Activated CD8-positive, alpha-beta T cell treated with anti-CD3 and anti-CD28 coated beads for 36 hours (primary cell): ENCODE measurements at regions of chr6 and their contacts with region 1.

Region 1: DNA sequence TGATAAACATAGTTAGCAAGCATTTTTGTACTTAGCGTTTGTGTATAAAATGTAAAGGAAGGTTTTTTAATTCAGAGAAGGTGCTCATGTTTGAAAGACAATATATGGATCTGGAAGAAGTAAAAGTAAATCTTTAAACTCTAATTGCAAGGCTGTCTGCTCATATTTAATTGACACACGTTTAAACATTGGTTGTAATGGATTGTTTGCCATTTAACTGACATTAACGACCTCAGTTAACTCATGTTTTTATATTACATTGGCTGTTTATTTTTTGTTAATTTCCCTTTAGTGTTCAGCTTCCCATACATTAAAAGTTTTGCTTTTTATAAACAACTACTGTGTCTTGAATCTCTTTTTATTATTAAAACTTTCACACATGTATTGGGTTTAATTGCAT is 208.1 kb downstream of the ARID1B start:
- DNase-seq: no peak
- ATAC-seq: no peak
- H3K4me3 Mint-ChIP-seq: no peak overlapping the region
- H3K27ac Mint-ChIP-seq: no peak overlapping the region
- H3K4me1 Mint-ChIP-seq: peaks cover 65% of the 10 kb centered on the region
- H3K27me3 Mint-ChIP-seq: no peaks in the 10 kb centered on the region
- CTCF ChIP-seq: no peak

Region 2: DNA sequence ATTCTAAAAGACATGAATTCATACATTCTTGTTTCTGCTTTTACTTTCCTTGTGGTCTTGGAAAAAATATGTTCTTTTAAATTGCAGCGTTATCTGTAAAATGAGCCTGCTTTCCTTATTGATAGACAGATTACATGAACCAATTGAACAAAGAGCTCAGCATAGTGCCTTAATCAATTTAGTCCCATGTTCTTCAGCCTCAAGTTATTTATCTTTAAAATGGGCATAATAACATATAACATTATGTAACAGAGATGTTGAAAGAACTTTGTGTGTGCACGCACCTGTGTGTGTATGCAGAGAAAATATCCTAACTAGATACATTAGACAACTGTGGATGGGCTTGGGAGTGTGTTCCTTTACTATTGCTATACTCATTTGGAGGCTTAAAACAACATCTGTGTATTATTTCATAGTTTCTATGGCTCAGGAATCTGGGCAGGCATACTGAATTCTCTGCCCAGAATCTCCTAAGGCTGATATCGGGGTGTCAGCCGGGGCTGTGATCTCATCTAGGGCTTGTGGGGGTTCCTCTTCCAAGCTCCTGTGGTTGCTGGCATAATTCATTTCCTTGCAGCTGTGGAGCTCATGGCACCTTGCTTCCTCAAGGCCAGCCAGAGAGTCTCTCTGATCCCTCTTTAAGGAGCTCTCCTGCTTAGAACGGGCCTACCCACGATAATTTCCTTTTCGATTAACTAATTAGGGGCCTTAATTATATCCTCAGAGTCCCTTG is 14.0 kb before region 1 on chr6:
- CTCF ChIA-PET with region 1: no interaction called
- POLR2A ChIA-PET with region 1: no interaction called
- intact Hi-C with region 1: no loop called
- DNase-seq: no peak
- ATAC-seq: no peak
- H3K4me3 Mint-ChIP-seq: no peak overlapping the region
- H3K27ac Mint-ChIP-seq: no peak overlapping the region
- H3K4me1 Mint-ChIP-seq: peaks cover 72% of the 10 kb centered on the region
- H3K27me3 Mint-ChIP-seq: no peaks in the 10 kb centered on the region
- CTCF ChIP-seq: no peak

Region 3: GRCh38 chr6:157001716-157002115 is 16.4 kb after region 1 on chr6:
- CTCF ChIA-PET with region 1: interaction called, 12 read pairs
- POLR2A ChIA-PET with region 1: interaction called, 4 read pairs
- intact Hi-C with region 1: no loop called
- DNase-seq: no peak
- ATAC-seq: no peak
- H3K4me3 Mint-ChIP-seq: no peak overlapping the region
- H3K27ac Mint-ChIP-seq: no peak overlapping the region
- H3K4me1 Mint-ChIP-seq: peaks cover 18% of the 10 kb centered on the region
- H3K27me3 Mint-ChIP-seq: no peaks in the 10 kb centered on the region
- CTCF ChIP-seq: no peak

Region 4: GRCh38 chr6:157021344-157021992 is 36.2 kb after region 1 on chr6:
- CTCF ChIA-PET with region 1: no interaction called
- POLR2A ChIA-PET with region 1: no interaction called
- intact Hi-C with region 1: no loop called
- DNase-seq: peak; percentile 92
- ATAC-seq: peak; percentile 82
- H3K4me3 Mint-ChIP-seq: peak overlapping the region; percentile 93
- H3K27ac Mint-ChIP-seq: peak overlapping the region; percentile 100
- H3K4me1 Mint-ChIP-seq: peaks cover 52% of the 10 kb centered on the region
- H3K27me3 Mint-ChIP-seq: no peaks in the 10 kb centered on the region
- CTCF ChIP-seq: peak; percentile 37